A549 (cell line): ENCODE measurements at regions of chr5 and their contacts with region 1.

Region 1: GRCh38 chr5:140073296-140073695 is 30.2 kb upstream of the NRG2 start:
- DNase-seq: no peak
- ATAC-seq: no peak
- H3K4me3 ChIP-seq: no peak overlapping the region
- H3K27ac ChIP-seq: no peak overlapping the region
- H3K4me1 ChIP-seq: no peaks in the 10 kb centered on the region
- CTCF ChIP-seq: peak; percentile 73
- EP300 ChIP-seq: no peak
- POLR2A ChIP-seq: no peak
- RAD21 ChIP-seq: peak; percentile 70 to 71

Region 2: DNA sequence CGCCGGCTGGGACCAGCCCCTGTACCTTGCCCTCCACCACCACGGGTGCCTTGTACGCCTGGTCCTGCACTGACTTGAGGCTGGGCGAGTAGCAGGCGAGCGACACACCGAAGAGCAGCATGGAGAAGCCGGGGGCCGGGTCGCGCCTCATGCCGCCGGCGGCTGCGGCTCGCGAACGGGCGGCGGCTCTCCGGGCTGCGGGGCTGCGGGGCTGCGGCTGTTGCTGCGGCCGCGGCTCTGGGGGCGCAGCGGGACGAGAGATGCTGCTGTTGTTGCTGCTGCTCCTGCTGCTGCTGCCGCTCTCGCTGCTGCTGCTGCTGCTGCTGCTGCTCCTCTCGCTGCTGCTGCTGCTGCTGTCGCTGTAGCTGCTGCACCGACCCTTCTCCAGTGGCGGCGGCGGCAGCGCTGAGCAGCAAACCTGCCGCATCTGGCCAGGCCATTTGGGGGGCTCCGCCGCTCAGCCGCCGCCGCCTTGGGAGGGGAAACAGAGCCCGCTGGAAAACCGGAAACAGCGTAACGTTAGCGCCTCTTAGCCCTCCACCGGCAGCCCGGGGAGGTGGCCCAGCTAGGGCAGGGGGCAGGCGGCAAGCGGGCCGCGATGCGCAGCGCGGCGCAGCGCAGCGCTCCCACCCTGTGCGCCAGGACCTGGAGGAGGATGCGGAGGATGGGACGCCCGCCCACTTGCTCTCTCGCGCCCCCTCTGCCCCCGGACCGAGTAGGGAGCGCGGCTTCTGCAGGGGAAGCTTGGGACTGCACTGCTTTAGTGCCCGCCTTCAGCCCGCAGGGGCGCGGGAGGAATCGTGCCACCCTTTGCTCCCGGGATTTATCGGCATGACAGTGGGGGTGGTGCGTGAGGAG is 30.4 kb before region 1 on chr5 and contains the start of gene NRG2:
- CTCF ChIA-PET with region 1: interaction called, 10 read pairs
- POLR2A ChIA-PET with region 1: no interaction called
- DNase-seq: peak; percentile 83 to 89
- ATAC-seq: peak; percentile 86 to 95
- H3K4me3 ChIP-seq: peak within 1 kb of the TSS; percentile 54
- H3K27ac ChIP-seq: peak within 1 kb of the TSS; percentile 47 to 78
- H3K4me1 ChIP-seq: peaks cover 17% of the 10 kb centered on the region; the same call in 2 of the 3 replicates
- CTCF ChIP-seq: peak; percentile 58
- EP300 ChIP-seq: no peak
- POLR2A ChIP-seq: peak; percentile 48
- RAD21 ChIP-seq: no peak; a peak in 1 of 5 replicates
- polyA plus RNA-seq, gene NRG2: 0.65 and 1.1 TPM in 2 replicates

Region 3: DNA sequence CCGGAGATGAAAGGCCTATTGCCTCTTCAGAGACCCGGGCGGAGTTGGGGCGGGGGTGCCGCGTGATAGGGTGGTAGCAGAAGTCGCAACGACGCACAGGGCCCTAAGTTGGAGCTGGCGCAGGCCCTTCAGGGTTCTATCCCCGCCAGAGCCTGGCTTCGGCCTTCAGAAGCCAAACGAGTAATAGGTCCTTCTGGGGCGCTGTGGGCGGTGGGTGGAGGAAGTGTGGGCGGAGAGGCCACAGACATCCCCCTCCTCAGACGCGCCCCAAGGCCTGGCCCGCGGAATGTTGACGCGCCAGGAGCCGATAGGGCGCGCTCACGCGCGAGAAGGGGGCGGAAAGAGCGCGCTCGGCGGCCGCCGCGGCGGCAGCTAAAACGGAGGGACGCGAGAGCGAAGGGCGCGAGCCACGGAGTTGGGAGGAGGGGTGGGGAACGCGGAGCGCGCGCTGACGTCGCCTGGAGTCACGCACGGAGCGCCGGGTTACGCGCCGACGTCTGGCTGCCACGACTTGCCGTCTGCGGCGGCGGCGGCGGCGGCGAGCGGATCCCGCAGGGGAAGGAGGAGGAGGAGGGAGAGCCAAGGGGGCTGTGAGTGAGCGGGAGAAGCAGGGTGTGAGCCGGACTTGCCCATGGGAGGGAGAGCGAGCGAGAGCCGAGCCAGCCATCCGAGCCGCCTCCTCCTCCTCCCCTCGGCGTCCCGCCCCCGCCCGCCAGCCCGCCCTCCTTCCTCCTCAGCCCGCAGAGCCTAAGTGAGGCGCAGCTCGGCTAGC is 34.2 kb after region 1 on chr5:
- CTCF ChIA-PET with region 1: interaction called, 13 read pairs
- POLR2A ChIA-PET with region 1: interaction called, 5 read pairs
- DNase-seq: peak; percentile 92 to 95
- ATAC-seq: peak; percentile 92 to 94
- H3K4me3 ChIP-seq: peak overlapping the region; percentile 82
- H3K27ac ChIP-seq: peak overlapping the region; percentile 77 to 97
- H3K4me1 ChIP-seq: peaks cover 20% of the 10 kb centered on the region
- CTCF ChIP-seq: peak; percentile 12; the same call in 1 of the 3 replicates
- EP300 ChIP-seq: no peak
- POLR2A ChIP-seq: peak; percentile 76
- RAD21 ChIP-seq: no peak

Region 4: DNA sequence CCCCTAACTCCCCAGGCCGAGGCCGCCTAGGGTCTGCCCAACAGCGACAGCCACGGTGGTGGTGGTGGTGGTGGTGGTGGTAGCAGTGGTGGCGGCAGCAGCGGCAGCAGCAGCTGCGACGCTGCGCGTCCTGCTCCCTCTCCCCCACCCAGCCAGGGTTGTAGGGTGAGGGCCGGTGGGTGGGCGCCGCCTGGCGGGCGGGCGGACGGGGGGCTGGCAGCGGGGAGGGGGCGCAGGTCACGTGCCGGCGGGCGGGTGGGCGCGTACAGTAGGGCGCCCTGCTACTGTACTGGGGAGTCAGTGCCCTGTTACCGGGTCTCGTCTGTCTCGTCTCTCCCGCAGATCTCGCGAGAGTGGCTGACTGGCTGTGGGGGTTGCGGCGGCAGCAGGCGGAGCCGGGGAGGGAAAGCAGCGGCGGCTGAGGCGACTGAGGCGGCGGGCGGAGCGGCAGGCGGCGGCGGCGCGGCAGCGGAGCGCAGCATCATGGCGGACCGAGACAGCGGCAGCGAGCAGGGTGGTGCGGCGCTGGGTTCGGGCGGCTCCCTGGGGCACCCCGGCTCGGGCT is 40.5 kb after region 1 on chr5 and contains the start of gene PURA:
- CTCF ChIA-PET with region 1: interaction called, 11 read pairs
- POLR2A ChIA-PET with region 1: no interaction called
- DNase-seq: peak; percentile 92 to 94
- ATAC-seq: peak; percentile 91 to 93
- H3K4me3 ChIP-seq: peak within 1 kb of the TSS; percentile 68
- H3K27ac ChIP-seq: peak within 1 kb of the TSS; percentile 92 to 96
- H3K4me1 ChIP-seq: peaks cover 48% of the 10 kb centered on the region
- CTCF ChIP-seq: peak; percentile 24; the same call in 2 of the 3 replicates
- EP300 ChIP-seq: no peak
- POLR2A ChIP-seq: peak; percentile 85
- RAD21 ChIP-seq: 0 out of 5 replicates have a peak, but pooled peaks of 1 of the 2 experiments have one; percentile 19
- polyA plus RNA-seq, gene PURA: 3.4 and 4.5 TPM in 2 replicates

Region 5: GRCh38 chr5:140131967-140132409 is 58.7 kb after region 1 on chr5:
- CTCF ChIA-PET with region 1: interaction called, 14 read pairs
- POLR2A ChIA-PET with region 1: no interaction called
- DNase-seq: peak in 1 of 2 experiments; percentile 15
- ATAC-seq: peak in 1 of 2 experiments; percentile 58; a peak in 3 of 6 replicates
- H3K4me3 ChIP-seq: no peak overlapping the region
- H3K27ac ChIP-seq: no peak overlapping the region
- H3K4me1 ChIP-seq: 0 out of 3 replicates have a peak, but pooled peaks cover 11% of the 10 kb centered on the region
- CTCF ChIP-seq: no peak
- EP300 ChIP-seq: no peak
- POLR2A ChIP-seq: no peak
- RAD21 ChIP-seq: no peak

Region 6: GRCh38 chr5:140157032-140157803 is 83.9 kb after region 1 on chr5:
- CTCF ChIA-PET with region 1: interaction called, 149 read pairs
- POLR2A ChIA-PET with region 1: no interaction called
- DNase-seq: peak; percentile 80 to 95
- ATAC-seq: peak; percentile 94 to 97
- H3K4me3 ChIP-seq: peak overlapping the region; percentile 36
- H3K27ac ChIP-seq: peak overlapping the region; percentile 60 to 87
- H3K4me1 ChIP-seq: peaks cover 4% of the 10 kb centered on the region; the same call in 1 of the 3 replicates
- CTCF ChIP-seq: peak; percentile 96
- EP300 ChIP-seq: no peak
- POLR2A ChIP-seq: no peak
- RAD21 ChIP-seq: peak; percentile 96